ENCODE measurements at regions of chr14 and their contacts with region 1.

Region 1: GRCh38 chr14:64671591-64671990 is 32.6 kb upstream of the PLEKHG3 start:
- DNase-seq: no peak

Region 2: DNA sequence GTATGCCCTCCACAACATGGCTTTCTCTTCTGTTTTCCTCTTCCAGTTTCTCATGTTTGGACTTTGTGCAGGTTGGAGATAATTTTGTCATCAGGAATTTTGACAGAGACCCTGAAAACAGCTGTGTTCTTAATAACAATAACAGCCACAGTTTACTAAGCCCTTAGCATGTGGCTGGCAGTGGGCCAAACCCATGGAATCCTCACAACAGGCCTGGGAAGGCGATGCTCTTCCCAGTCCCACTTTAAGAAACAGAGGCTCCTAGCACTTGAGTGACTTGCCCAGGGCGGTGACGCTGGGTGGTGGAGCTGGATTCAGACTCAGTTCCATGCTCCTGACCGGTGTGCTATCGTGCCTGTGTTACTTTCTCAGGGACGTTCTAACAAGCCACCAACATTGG is 12.5 kb after region 1 on chr14:
- intact Hi-C with region 1: no loop called
- DNase-seq: no peak

Region 3: DNA sequence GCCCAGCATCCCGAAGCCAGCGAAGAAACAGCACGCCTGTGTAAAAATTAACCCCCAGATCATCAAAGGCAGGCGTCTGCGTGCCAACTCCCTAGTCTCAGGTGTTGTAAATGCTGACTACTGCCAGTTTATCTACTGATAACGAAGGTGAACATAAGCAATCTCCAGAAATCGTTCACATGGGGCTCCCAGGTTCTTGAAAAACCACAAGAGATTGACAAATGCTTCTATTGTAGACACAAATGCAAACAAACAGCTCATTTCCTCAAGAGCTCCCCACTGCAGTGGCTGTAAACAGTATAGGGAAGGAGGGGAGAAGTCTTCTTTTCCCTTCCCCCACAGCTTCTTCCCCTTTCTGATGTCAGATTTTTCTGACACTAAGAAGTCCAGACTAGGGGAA is 27.3 kb after region 1 on chr14:
- intact Hi-C with region 1: no loop called
- DNase-seq: no peak

Region 4: GRCh38 chr14:64764641-64765520 is 93.3 kb after region 1 on chr14:
- intact Hi-C with region 1: loop called (anchors 2 to 5 kb)
- DNase-seq: peak; percentile 90

Region 5: GRCh38 chr14:64880221-64881121 is 208.9 kb after region 1 on chr14:
- intact Hi-C with region 1: loop called in 1 of 2 experiments (anchors 10 kb)
- DNase-seq: peak; percentile 83

Region 6: GRCh38 chr14:65506809-65507208 is 835.2 kb after region 1 on chr14:
- intact Hi-C with region 1: no loop called
- DNase-seq: no peak